Activated CD8-positive, alpha-beta T cell treated with anti-CD3 and anti-CD28 coated beads for 36 hours (primary cell): ENCODE measurements at regions of chr4 and their contacts with region 1.

Region 1: DNA sequence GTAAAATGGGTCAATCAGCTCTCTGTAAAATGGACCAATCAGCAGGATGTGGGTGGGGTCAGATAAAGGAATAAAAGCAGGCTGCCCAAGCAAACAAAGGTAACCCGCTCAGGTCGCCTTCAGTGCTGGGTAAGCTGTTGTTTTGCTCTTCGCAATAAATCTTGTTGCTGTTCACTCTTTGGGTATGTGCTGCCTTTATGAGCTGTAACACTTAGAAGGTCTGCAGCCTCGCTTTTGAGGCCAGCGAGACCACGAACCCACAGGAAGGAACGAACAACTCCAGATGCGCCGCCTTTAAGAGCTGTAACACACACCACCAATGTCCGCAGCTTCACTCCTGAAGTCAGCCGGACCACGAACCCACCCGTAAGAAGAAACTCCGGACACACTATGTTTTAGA is 11.5 kb upstream of the CAMK2D start:
- DNase-seq: peak; percentile 35
- ATAC-seq: peak; percentile 43
- H3K4me3 Mint-ChIP-seq: peak overlapping the region; percentile 46
- H3K27ac Mint-ChIP-seq: peak overlapping the region; percentile 16
- H3K4me1 Mint-ChIP-seq: peaks cover 34% of the 10 kb centered on the region
- H3K27me3 Mint-ChIP-seq: no peaks in the 10 kb centered on the region
- CTCF ChIP-seq: no peak

Region 2: DNA sequence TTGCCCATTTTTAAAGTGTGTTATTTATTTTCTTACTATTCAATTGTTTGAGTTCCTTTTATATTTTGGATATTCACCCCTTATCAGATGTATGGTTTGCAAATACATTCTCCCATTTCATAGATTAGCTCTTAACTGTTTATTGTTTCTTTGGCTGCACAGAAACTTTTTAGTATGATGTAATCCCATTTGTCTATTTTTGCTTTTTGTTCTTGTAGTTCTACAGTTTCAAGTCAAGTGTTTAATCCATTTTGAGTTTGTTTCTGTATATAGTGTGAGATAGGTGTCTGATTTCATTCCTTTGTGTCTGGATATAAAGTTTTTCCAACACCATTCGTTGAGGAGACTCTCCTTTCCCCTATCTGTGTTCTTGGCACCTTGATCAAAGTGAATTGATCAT is 85.9 kb after region 1 on chr4:
- CTCF ChIA-PET with region 1: no interaction called
- POLR2A ChIA-PET with region 1: no interaction called
- intact Hi-C with region 1: no loop called
- DNase-seq: no peak
- ATAC-seq: no peak
- H3K4me3 Mint-ChIP-seq: no peak overlapping the region
- H3K27ac Mint-ChIP-seq: no peak overlapping the region
- H3K4me1 Mint-ChIP-seq: no peaks in the 10 kb centered on the region
- H3K27me3 Mint-ChIP-seq: no peaks in the 10 kb centered on the region
- CTCF ChIP-seq: no peak

Region 3: DNA sequence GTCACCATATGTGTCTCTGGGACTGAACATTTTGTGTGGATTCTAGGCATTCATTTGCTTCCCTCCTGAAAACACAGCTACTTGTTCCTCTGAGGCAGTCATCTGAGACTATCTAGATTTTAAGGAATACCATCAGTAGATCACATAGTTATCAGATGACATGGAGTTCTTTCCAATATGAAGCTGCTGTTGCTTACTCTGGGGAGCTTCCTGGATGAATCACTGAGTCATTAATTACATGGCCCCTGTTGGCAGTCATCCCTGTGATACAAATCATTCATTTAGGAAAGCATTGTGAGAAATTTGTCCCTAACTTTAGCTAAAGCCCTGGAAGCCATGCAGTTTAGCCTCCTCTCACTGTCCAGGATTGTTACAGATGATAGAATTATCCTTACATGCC is 304.6 kb after region 1 on chr4:
- CTCF ChIA-PET with region 1: no interaction called
- POLR2A ChIA-PET with region 1: no interaction called
- intact Hi-C with region 1: loop called (anchors 10 kb)
- DNase-seq: no peak
- ATAC-seq: no peak
- H3K4me3 Mint-ChIP-seq: no peak overlapping the region
- H3K27ac Mint-ChIP-seq: no peak overlapping the region
- H3K4me1 Mint-ChIP-seq: no peaks in the 10 kb centered on the region
- H3K27me3 Mint-ChIP-seq: no peaks in the 10 kb centered on the region
- CTCF ChIP-seq: no peak